Panc1 (cell line): ENCODE measurements at regions of chr12 and their contacts with region 1.

Region 1: GRCh38 chr12:63862214-63863107 is 18.0 kb downstream of the SRGAP1 start:
- DNase-seq: peak; percentile 67
- ATAC-seq: peak; percentile 93
- H3K4me3 ChIP-seq: peak overlapping the region; percentile 8 to 43; a peak in 3 of 4 replicates
- H3K27ac ChIP-seq: peak overlapping the region; percentile 93
- H3K4me1 ChIP-seq: peaks cover 76% of the 10 kb centered on the region
- H3K27me3 ChIP-seq: no peaks in the 10 kb centered on the region
- CTCF ChIP-seq: no peak

Region 2: GRCh38 chr12:63917864-63918799 is 55.7 kb after region 1 on chr12:
- CTCF ChIA-PET with region 1: no interaction called
- POLR2A ChIA-PET with region 1: no interaction called
- in situ Hi-C with region 1: no loop called
- intact Hi-C with region 1: loop called (anchors 5 kb)
- DNase-seq: peak; percentile 90
- ATAC-seq: peak; percentile 81
- H3K4me3 ChIP-seq: peak overlapping the region; percentile 6 to 42; a peak in 3 of 4 replicates
- H3K27ac ChIP-seq: peak overlapping the region; percentile 99
- H3K4me1 ChIP-seq: peaks cover 92% of the 10 kb centered on the region
- H3K27me3 ChIP-seq: no peaks in the 10 kb centered on the region
- CTCF ChIP-seq: no peak